Activated T-helper 2 cell treated with anti-CD3 and anti-CD28 coated beads, Interferon-gamma antibody, Interleukin-2, Interleukin-4, amounts not matched to agents 10 μg/mL and 5 μg/mL and 100 μg/mL, durations not matched to agents 14 hours and 24 hours and 36 hours (primary cell): ENCODE measurements at regions of chr15 and their contacts with region 1.

Region 1: GRCh38 chr15:78000091-78000926 is 77.2 kb downstream of the TBC1D2B start:
- DNase-seq: peak; percentile 68
- H3K4me3 Mint-ChIP-seq: no peak overlapping the region
- H3K27ac Mint-ChIP-seq: no peak overlapping the region
- H3K4me1 Mint-ChIP-seq: peaks cover 12% of the 10 kb centered on the region
- H3K27me3 Mint-ChIP-seq: no peaks in the 10 kb centered on the region

Region 2: DNA sequence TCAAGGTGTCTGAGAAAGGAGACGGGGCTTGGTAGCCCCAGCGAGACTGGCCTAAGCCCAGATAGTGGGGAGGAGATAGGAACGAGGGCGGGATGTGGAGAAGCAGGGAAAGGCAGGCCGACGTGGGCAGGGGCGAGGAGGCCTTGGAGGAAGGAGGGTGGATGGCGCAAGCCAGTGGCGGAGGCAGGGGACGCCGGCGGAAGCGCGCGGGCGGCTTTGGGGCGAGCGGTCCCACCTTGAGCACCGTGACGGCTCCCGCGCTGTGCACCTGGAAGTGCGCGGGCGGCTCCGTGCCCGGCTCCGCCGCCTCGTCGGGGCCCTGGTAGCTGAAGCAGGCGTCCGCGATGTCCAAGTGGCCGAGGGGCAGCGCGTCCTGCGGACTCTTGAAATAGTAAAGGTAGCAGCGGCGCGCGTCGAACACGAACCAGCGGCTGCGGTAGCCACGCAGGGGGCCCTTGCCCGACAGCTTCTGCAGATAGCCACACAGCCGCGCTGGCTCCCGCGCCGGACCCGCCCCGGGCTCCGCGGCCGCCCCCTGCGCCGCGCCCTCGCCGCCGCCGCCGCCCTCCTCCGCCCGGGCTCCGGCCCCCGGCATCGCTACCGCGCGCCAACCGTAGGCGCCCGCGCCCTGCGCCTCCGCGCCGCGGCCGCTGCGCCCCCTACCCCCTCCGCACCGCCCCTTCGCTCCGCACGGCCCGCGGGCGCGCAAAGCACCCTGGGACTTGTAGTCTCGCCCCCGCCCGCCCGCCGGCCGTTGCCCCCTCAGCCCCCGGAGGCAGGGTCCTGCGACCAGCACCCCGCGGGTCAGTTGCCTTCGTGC is 77.0 kb after region 1 on chr15 and contains the start of gene TBC1D2B:
- intact Hi-C with region 1: loop called (anchors 2 kb)
- DNase-seq: peak; percentile 63
- H3K4me3 Mint-ChIP-seq: peak within 1 kb of the TSS; percentile 97
- H3K27ac Mint-ChIP-seq: peak within 1 kb of the TSS; percentile 89
- H3K4me1 Mint-ChIP-seq: peaks cover 40% of the 10 kb centered on the region
- H3K27me3 Mint-ChIP-seq: no peaks in the 10 kb centered on the region
- total RNA-seq, gene TBC1D2B: 55.0 and 63.5 TPM in 2 replicates